ENCODE measurements at regions of chr15 and their contacts with region 1.

Region 1: DNA sequence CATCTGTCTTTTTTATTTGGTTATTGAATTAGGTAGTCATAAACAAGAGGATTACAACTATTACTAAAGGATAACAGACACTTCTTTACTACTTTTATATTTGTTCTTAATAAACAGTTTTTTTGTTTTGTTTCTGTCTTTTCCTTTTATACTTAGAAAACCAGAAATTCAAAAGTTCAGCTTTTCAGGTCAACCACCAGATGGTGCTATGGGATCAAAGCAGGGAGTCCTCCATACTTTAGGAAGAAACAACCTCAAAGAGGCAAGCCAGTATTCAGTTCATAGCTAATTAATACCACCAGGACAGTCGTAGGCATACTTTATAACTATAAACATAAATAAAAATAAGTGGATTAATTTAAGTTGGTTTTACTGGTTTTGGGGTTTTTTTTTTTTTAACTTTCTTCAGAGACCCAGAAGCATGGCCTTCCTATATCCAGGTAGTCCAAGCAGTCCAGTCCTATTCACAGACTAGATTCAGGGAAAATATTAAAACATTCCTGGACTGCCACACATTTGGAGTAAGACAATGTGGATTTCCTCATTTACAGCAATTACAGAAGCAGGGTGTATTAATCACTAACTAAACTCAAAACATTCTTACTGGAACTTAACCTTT is 16.0 kb upstream of the EID1 start:
- DNase-seq: peak; percentile 57
- ATAC-seq: peak; percentile 73
- H3K4me3 ChIP-seq: no peak overlapping the region
- H3K27ac ChIP-seq: no peak overlapping the region
- H3K4me1 ChIP-seq: peaks cover 9% of the 10 kb centered on the region
- H3K27me3 ChIP-seq: no peaks in the 10 kb centered on the region; a peak in 2 of 5 replicates
- CTCF ChIP-seq: peak; percentile 74
- EP300 ChIP-seq: no peak
- POLR2A ChIP-seq: no peak
- RAD21 ChIP-seq: peak; percentile 61

Region 2: DNA sequence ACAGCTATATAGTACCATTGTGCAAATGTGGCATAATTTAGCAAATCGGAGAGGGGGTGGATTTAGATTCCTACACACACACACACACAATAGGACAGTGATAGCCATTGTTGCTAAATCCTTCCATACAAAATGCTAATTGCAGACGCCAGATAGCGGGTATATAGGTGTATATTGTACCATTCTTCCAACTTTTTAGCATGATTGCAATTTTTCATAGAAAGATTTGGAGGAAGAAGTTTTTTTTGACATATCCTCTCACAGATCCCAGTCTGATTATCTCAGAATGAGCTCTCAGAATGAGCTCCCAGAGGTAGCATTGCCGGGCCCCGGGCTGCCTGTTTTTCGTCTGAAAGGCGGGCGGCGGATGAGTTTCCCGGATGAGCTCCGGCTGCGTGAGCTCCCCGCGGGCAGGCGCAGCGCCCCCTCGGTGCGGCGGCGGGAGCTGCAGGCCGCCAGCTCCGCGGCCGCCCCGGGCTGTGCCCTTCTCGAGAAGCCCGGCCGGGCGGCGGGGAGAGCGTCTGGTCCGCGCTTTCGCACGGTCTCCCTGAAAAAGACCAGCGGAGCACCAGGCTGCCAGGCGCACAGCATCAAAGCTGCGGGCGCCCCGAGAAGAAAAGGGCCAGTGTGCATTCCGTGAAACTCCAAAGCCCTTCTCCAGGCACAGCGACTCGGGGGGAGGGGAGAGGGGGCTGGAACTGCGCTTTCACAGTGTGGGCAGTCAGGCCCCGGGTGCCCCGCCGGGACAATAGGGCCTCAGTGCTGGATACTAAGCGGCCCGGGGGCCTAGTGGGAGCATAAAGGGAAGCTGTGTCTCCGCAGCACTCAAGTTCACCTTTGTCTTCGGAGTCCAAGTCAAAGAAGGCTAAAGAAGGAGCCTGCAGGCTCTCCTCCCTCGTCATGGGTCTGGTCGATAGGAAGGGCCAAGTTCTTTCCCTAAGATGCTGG is 113.8 kb after region 1 on chr15:
- CTCF ChIA-PET with region 1: no interaction called
- POLR2A ChIA-PET with region 1: no interaction called
- in situ Hi-C with region 1: no loop called
- intact Hi-C with region 1: loop called (anchors 2 kb)
- DNase-seq: peak; percentile 65
- ATAC-seq: peak; percentile 94
- H3K4me3 ChIP-seq: peak overlapping the region; percentile 69 to 80 (median 71)
- H3K27ac ChIP-seq: peak overlapping the region; percentile 51
- H3K4me1 ChIP-seq: peaks cover 18% of the 10 kb centered on the region
- H3K27me3 ChIP-seq: peaks cover 3 to 6% of the 10 kb centered on the region in 2 experiments; a peak in 3 of 5 replicates
- CTCF ChIP-seq: peak; percentile 76
- EP300 ChIP-seq: no peak; a peak in 1 of 4 replicates
- POLR2A ChIP-seq: peak in 1 of 2 experiments; percentile 14; a peak in 2 of 4 replicates
- RAD21 ChIP-seq: peak; percentile 57

Region 3: DNA sequence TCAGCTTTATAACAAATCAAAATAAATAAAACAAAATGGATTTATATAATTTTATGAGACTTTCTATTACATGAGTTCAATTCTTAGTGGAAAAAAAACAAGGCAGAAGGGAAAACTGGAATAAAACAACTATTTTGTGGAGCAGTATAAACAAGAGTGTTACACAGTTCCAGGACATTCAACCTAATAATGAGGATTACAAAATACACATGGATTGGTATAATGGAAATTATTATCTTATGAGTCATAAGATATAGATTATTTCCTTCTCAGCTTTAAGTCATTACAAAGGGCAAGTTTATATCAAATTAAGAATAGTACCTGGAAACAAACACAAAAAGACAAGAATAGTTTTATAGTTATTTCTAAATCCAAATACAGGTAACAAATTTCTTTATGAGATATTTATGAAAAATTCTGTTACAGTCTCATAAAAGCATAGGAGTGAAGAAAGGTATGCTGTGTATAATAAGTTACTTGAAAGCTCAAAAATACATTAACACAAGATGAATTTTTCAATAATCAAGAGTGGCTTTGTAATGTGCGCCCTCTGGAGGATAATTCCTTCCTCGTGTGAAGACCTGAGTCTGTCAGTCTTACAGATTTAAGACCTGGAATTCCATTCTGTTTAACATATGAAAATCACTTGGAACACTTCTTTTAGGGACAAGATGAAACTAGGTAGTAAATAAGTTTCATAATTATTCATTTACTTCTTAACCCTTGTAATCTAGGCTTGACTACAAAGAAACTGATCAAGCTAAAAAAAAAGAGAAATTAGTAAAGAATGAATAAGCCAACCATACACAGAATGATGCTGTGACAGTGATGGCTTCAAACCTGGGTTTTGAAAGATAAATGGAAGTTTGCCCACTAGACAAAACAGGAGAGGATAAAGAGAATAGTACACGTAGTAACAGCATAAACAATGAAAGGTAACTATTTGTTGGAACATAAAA is 284.0 kb after region 1 on chr15:
- CTCF ChIA-PET with region 1: interaction called, 16 read pairs
- POLR2A ChIA-PET with region 1: no interaction called
- in situ Hi-C with region 1: loop called (anchors 10 kb)
- intact Hi-C with region 1: loop called (anchors 1 kb)
- DNase-seq: peak; percentile 45
- ATAC-seq: peak; percentile 63
- H3K4me3 ChIP-seq: no peak overlapping the region
- H3K27ac ChIP-seq: no peak overlapping the region
- H3K4me1 ChIP-seq: no peaks in the 10 kb centered on the region; the same call in 1 of the 2 replicates
- H3K27me3 ChIP-seq: no peaks in the 10 kb centered on the region
- CTCF ChIP-seq: peak; percentile 62
- EP300 ChIP-seq: no peak
- POLR2A ChIP-seq: no peak
- RAD21 ChIP-seq: no peak

Region 4: GRCh38 chr15:49421991-49422390 is 560.1 kb after region 1 on chr15:
- CTCF ChIA-PET with region 1: interaction called, 21 read pairs
- POLR2A ChIA-PET with region 1: no interaction called
- in situ Hi-C with region 1: loop called (anchors 5 kb)
- intact Hi-C with region 1: no loop called
- DNase-seq: peak; percentile 53
- ATAC-seq: no peak; the same call in 2 of the 3 replicates
- H3K4me3 ChIP-seq: no peak overlapping the region
- H3K27ac ChIP-seq: no peak overlapping the region
- H3K4me1 ChIP-seq: no peaks in the 10 kb centered on the region
- H3K27me3 ChIP-seq: no peaks in the 10 kb centered on the region
- CTCF ChIP-seq: peak; percentile 72
- EP300 ChIP-seq: no peak
- POLR2A ChIP-seq: no peak
- RAD21 ChIP-seq: peak; percentile 39; the same call in 1 of the 2 replicates